A549 (cell line): ENCODE measurements at regions of chr10 and their contacts with region 1.

Region 1: DNA sequence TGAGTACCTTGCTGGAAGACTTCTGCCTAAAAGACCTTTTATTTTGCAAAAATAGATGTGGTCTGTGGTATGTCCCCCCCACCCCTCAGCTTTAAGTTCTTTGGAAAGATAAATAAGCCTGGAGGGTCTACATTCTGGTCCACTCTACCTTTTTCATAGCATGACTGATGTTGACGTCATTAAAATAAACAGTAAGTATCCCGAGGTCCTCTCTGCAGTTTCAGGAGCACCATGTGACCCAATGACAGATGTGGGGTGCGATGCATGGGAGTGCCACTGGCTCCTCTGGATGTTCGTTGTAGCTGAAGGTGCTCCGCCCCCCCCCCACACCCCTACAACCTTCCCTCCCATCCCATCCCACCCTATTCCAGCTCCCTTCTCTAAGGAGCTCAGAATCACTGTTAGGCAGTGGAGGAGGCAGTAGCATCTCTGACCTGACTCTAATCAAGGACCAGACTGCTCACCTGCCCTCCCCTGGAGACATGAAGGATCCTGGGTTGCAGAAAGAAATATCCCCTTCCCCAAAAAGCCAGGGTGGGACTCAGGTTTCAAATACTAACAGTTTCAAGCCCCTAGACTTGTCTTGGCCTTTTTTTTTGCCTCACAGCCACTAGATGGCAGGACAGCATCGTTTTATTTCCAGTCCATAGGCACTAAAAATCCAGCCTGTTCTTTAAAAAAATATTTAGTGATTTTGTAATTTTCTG is 25.1 kb downstream of the CASP7 start:
- DNase-seq: peak; percentile 20 to 49
- ATAC-seq: peak; percentile 61 to 89; a peak in 4 of 6 replicates
- H3K4me3 ChIP-seq: no peak overlapping the region
- H3K27ac ChIP-seq: no peak overlapping the region
- H3K4me1 ChIP-seq: peaks cover 25% of the 10 kb centered on the region
- CTCF ChIP-seq: peak; percentile 87
- EP300 ChIP-seq: no peak
- POLR2A ChIP-seq: no peak
- RAD21 ChIP-seq: peak; percentile 80 to 82

Region 2: DNA sequence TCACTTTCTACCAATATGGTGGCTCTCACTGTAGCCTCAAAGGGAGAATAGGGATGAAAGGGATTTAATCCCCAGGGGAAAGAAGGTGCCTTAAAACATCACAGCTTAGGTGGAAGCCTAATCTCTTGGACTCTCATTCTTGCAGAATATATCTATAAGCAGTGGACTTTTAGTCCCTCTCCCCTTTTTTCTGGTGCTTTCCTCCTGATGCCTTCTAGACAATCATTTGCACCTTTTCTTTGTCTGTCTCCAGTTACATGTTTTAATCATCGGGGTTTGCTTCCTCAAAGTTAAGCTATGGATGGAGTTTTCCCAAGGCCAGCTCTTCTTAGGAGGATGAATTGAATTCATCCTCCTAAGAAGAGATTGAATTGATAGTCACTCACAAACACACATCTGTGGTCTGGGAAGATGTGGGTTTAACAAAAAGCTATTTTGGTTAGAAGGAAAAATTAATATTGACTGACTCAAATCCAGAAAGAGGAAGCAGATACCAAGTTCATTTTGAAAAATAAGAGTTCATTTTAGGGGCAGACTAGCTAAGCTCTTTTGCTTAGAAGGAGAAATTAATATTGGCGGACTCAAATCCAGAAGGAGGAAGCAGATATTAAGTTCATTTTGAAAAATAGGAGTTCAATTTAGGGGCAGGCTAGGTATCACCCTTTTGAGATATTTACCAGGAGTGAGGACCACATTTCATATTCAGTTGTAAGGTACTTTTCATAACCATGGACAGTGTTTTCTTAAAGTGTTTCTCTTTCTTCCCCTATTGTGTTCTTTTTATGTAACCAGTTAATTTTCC is 11.5 kb after region 1 on chr10:
- CTCF ChIA-PET with region 1: interaction called, 13 read pairs
- POLR2A ChIA-PET with region 1: no interaction called
- DNase-seq: no peak
- ATAC-seq: no peak
- H3K4me3 ChIP-seq: no peak overlapping the region
- H3K27ac ChIP-seq: no peak overlapping the region
- H3K4me1 ChIP-seq: no peaks in the 10 kb centered on the region
- CTCF ChIP-seq: no peak
- EP300 ChIP-seq: no peak
- POLR2A ChIP-seq: no peak
- RAD21 ChIP-seq: no peak